Mammary epithelial cell (primary cell): ENCODE measurements at regions of chr12 and their contacts with region 1.

Region 1: DNA sequence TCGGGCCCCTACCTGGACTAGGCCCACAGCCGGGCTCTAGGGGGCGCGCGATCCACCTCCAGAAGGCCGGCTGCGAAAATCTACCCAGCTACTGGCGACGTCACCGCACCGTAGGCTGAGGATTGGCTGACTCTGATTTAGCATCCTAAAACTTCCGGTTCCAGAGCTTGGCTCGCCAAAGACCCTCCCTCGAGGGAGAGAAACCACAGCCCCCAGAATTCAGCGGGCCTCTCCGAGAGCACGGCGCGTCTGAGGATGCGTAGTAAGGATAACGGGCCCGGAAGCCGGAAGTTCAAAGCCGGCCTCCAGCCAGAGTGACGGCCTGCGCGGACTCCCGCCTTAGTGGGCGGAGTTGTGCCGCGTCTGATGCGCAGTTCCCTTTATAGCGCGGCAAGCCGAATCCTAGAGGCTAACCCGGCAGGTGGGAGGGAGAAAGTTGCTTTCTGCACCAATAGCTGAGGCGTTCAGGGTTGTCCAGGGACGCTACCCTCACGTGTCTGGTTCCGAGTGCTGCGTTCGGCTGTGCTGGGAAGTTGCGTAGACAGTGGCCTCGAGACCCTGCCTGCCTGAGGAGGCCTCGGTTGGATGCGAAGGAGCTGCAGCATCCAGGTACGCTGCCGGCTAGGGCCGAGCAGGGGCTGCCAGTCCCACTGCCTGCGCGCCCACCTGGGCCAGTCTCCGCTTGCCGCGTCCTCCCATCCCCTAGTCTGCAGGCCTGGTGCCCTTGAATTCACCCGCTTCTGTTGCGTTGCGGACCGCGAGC is at the start of gene COX14:
- DNase-seq: peak; percentile 100
- H3K4me3 ChIP-seq: peak within 1 kb of the TSS; percentile 64 to 100 (median 87)
- H3K27ac ChIP-seq: peak within 1 kb of the TSS; percentile 76
- H3K4me1 ChIP-seq: peaks cover 15% of the 10 kb centered on the region
- H3K27me3 ChIP-seq: no peaks in the 10 kb centered on the region
- CTCF ChIP-seq: peak; percentile 83 to 94
- total RNA-seq, gene COX14: 38.5 to 51.3 TPM

Region 2: GRCh38 chr12:50167041-50167828 is 55.4 kb after region 1 on chr12 and contains the start of gene CERS5:
- CTCF ChIA-PET with region 1: interaction called, 11 read pairs
- dilution Hi-C with region 1: no loop called
- in situ Hi-C with region 1: no loop called
- intact Hi-C with region 1: loop called (anchors 2 kb)
- DNase-seq: peak; percentile 99
- H3K4me3 ChIP-seq: peak within 1 kb of the TSS; percentile 54 to 70 (median 62)
- H3K27ac ChIP-seq: peak within 1 kb of the TSS; percentile 76
- H3K4me1 ChIP-seq: peaks cover 7% of the 10 kb centered on the region
- H3K27me3 ChIP-seq: no peaks in the 10 kb centered on the region
- CTCF ChIP-seq: peak in 1 of 2 donors; percentile 13
- total RNA-seq, gene CERS5: 29.2 to 65.7 TPM

Region 3: GRCh38 chr12:50174971-50175715 is 63.3 kb after region 1 on chr12:
- CTCF ChIA-PET with region 1: interaction called, 3 read pairs
- dilution Hi-C with region 1: no loop called
- in situ Hi-C with region 1: no loop called
- intact Hi-C with region 1: loop called (anchors 2 kb)
- DNase-seq: no peak
- H3K4me3 ChIP-seq: no peak overlapping the region
- H3K27ac ChIP-seq: no peak overlapping the region
- H3K4me1 ChIP-seq: no peaks in the 10 kb centered on the region
- H3K27me3 ChIP-seq: no peaks in the 10 kb centered on the region
- CTCF ChIP-seq: peak; percentile 52 to 56

Region 4: GRCh38 chr12:50799908-50800307 is 688.0 kb after region 1 on chr12:
- CTCF ChIA-PET with region 1: no interaction called
- dilution Hi-C with region 1: no loop called
- in situ Hi-C with region 1: no loop called
- intact Hi-C with region 1: no loop called
- DNase-seq: no peak
- H3K4me3 ChIP-seq: no peak overlapping the region
- H3K27ac ChIP-seq: no peak overlapping the region
- H3K4me1 ChIP-seq: no peaks in the 10 kb centered on the region
- H3K27me3 ChIP-seq: no peaks in the 10 kb centered on the region
- CTCF ChIP-seq: no peak